ENCODE measurements at regions of chr20 and their contacts with region 1.

Region 1: GRCh38 chr20:53578492-53579222 is 15.0 kb downstream of the ZNF217 start:
- DNase-seq: peak in 1 of 2 donors; percentile 50
- ATAC-seq: peak; percentile 56

Region 2: DNA sequence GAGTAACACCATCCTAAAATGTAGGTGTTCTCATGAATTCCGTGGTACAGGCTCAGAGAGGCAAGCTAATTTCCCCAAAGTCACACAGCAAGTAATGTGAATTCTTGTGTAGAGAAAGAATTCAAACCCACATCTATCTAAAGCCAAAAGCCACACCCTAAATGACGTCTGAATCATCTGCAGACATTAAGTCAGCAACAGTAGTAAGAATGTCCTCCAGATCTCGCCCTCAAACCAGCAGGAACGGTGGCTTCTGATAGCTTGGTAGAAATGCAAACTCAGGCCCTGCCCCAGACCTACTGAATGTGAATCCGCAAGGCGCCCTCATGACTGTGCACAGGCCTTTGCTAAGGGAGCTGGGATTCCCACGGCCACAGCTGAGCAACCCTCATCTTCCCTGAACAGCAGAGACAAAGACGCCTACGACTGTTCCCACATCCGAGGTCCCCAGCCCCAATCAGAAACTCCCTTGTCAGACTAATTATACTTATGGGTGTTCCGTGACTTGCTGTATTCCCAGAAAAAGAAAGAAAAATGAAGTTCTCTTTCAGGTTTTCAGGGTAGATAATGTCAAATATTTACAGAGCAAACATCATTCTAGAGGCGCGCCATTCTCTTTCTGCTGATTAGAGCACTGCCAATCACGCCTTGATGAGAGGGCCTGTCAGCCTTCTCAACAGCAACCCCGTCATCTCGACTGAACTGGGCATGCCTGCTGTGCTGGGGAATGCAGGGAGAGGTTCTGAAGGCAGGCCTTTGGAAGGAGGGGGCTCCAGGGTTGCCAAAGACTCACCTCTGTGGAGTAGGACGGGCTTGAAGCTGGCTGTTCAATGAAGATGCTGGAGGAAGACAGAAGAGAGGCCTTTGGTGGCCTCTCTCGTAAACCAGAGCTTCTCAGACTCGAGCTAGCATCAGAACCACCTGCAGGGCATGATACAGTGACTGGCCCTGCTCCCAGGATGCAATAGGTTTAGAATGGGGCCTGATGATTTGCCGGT is 65.1 kb before region 1 on chr20:
- intact Hi-C with region 1: no loop called
- DNase-seq: peak; percentile 21 to 43
- ATAC-seq: peak; percentile 89

Region 3: GRCh38 chr20:53635221-53635924 is 56.7 kb after region 1 on chr20:
- intact Hi-C with region 1: no loop called
- DNase-seq: peak in 1 of 2 donors; percentile 16
- ATAC-seq: no peak

Region 4: GRCh38 chr20:53678990-53679596 is 100.4 kb after region 1 on chr20:
- intact Hi-C with region 1: no loop called
- DNase-seq: no peak
- ATAC-seq: no peak

Region 5: DNA sequence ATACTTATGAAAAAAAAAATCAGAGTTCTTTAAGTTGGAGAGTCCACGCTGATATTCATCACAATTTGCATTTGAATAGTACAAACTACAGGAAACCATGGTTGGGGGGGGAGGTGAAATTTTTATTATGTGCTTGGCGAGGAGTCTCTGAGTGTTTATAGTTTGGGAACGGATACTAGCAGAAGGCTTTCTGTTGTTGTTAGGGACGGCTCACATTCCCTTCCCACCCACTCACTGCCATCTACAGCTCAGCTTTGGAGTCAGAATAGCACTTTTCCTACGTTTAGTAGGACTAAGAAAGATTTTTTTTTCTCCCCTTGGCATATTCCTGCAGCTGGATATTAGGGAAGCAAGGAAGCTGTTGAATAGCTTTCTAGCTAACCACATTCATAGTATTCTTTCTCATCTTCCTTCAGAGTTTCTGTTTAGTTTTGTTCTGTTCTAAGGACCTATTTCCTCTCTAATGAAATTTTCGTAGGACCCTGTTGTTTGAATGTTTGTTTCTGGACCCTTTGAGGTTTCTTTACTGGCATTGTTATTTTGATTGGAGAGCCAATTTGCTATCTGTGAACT is 250.1 kb after region 1 on chr20:
- intact Hi-C with region 1: loop called in 1 of 2 experiments (anchors 5 kb)
- DNase-seq: no peak
- ATAC-seq: peak; percentile 50

Region 6: DNA sequence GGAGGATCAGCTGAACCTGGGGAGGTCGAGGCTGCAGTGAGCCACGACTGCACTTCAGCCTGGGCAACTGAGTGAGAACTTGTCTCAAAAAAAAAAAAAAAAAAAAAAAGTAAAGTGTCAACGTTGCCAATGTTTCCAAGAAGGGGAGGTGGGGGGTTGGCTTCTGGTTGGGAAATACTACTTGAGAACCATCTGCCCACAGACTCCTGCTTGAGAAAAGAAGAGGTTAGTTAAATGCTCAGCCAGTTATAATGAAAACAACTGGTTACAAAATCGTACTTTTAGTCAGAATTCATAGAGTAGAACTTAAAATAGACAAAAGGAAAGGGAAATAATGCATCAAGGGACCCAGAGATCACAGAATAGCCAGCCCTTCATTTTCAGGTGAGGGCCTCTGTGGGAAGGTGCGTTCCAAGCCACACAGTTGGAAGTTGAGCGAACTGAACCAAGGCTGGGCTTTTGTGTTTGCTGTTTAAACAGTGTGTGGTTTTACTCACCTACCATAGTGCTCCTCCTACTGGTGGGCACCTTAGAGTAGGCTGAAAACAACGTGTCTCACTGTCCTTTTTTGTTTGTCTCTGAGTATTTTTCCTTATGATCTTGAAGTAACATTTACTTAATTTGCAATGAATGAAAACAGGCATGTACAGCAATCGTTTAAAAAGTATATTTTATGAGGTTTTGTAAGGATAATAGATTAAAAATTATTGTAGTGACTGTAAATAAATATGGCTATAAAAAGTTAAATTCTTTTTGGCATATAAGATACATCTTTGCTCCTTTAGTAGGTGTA is 291.0 kb after region 1 on chr20:
- intact Hi-C with region 1: loop called in 1 of 2 experiments (anchors 5 kb)
- DNase-seq: peak; percentile 81 to 84
- ATAC-seq: peak; percentile 68

Region 7: DNA sequence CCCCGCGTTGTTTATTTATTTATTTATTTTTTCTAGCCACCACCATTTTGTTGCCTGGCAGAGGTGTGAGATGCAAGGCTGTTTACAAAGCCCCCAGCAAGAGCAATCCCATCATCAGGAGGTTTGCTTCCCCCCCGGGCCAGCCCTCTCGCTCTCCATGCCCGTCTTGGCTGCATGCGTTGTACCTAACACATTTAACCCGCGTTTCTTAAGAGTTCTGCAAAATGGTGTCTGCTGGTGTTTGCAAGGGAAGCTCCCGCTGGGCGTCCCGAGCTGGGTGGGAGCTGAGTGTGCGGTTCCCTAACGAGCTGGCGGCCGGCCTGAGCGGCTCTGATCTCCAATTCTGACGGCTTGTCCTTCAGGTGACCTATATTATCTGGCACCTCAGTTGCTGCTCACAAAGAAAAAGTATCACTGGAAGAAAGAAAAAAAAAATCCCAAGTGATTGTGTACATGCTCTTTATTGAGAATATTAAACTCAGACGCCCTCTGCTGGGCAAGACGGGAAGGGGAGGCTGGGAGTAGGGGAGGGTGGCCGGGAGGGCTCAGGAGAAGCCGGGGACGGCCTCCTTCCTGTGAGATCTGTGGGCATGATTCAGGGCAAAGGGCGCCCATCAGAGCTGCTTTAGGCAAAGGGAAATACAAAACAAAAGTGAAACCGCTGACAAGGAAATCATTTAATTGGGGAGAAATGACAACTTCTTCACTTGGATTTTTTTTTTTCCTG is 337.0 kb after region 1 on chr20:
- intact Hi-C with region 1: loop called in 1 of 2 experiments (anchors 2 kb)
- DNase-seq: peak; percentile 97 to 99
- ATAC-seq: peak; percentile 93

Region 8: DNA sequence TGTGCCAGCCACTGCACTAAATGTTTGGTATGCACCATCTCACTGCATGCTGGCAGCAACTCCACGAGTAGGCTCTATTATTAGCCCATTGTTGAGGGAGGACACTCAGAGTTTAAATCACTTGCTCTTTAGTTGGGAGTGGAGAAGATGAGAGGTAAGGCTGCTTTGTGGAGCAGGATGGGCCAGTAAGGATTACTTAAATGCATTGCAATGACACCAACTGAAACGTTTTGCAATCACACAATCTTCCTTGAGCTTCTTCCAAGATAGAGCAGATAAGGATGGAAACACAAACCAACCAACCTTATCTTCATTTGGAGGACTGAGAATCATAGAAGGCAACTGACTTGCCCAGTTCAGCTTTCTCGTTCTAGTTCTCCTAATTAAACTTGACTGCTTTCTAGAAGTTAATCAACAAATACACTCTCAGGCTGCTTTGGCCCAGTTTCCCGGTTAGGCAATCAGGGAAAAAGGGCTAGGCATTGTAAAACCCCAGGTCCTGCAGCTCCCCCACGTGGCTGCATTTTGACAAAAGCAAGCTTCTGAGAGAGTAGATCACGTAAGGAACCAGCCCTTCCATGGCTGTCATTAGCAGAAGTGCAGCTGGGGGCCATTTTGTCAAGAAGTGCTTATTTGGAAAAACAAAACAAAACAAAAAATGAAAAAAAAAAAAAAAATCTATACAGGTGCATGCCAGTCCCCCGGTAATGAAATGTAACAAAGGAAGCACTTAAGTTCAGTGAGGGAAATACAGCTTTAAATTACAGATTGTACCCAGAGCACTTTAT is 361.1 kb after region 1 on chr20:
- intact Hi-C with region 1: loop called in 1 of 2 experiments (anchors 5 kb)
- DNase-seq: peak; percentile 93 to 97
- ATAC-seq: peak; percentile 87

Region 9: DNA sequence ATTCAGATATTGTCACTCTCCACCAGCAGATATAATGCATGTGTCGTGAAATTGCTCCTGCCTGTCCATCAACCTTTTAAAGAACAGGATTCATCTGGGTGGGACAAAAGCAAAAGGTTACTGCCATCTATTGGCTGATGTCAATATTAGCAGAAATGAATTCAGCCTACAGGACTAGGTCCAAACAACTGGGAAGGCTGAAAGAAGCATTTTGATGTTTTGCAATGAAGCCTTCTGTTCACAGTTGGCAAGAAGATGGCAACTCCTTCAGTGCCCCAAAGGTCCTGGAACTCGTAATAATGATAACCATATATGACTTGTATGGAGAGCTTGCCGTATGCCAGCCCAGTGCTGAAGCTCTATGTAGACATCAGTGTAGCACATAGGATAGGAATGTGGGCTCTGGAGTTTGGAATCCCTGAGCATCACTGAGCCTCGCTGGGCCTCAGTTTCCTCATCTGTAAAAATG is 484.2 kb after region 1 on chr20:
- intact Hi-C with region 1: loop called in 1 of 2 experiments (anchors 10 kb)
- DNase-seq: no peak
- ATAC-seq: peak; percentile 13

Measured in left colon (tissue), 2 donors.